ENCODE measurements at regions of chr2 and their contacts with region 1.

Region 1: GRCh38 chr2:169694113-169694903 is at the starts of genes CFAP210 and PHOSPHO2:
- DNase-seq: peak; percentile 100
- H3K4me3 Mint-ChIP-seq: peak within 1 kb of the TSS; percentile 84
- H3K27ac Mint-ChIP-seq: peak within 1 kb of the TSS; percentile 83
- H3K4me1 Mint-ChIP-seq: peaks cover 14% of the 10 kb centered on the region
- H3K27me3 Mint-ChIP-seq: peaks cover 22% of the 10 kb centered on the region
- total RNA-seq, gene CFAP210: not detected in 2 replicates
- total RNA-seq, gene PHOSPHO2: 3.0 and 3.2 TPM in 2 replicates

Region 2: GRCh38 chr2:169573160-169573973 is 120.9 kb before region 1 on chr2 and contains the start of gene FASTKD1:
- intact Hi-C with region 1: loop called (anchors 1 kb)
- DNase-seq: peak; percentile 95
- H3K4me3 Mint-ChIP-seq: peak within 1 kb of the TSS; percentile 94
- H3K27ac Mint-ChIP-seq: peak within 1 kb of the TSS; percentile 90
- H3K4me1 Mint-ChIP-seq: peaks cover 13% of the 10 kb centered on the region
- H3K27me3 Mint-ChIP-seq: peaks cover 2% of the 10 kb centered on the region
- total RNA-seq, gene FASTKD1: 55.2 and 56.5 TPM in 2 replicates

Region 3: GRCh38 chr2:169683054-169683424 is 11.3 kb before region 1 on chr2:
- intact Hi-C with region 1: loop called (anchors 1 kb)
- DNase-seq: peak; percentile 67
- H3K4me3 Mint-ChIP-seq: no peak overlapping the region
- H3K27ac Mint-ChIP-seq: no peak overlapping the region
- H3K4me1 Mint-ChIP-seq: peaks cover 5% of the 10 kb centered on the region
- H3K27me3 Mint-ChIP-seq: peaks cover 5% of the 10 kb centered on the region

Region 4: DNA sequence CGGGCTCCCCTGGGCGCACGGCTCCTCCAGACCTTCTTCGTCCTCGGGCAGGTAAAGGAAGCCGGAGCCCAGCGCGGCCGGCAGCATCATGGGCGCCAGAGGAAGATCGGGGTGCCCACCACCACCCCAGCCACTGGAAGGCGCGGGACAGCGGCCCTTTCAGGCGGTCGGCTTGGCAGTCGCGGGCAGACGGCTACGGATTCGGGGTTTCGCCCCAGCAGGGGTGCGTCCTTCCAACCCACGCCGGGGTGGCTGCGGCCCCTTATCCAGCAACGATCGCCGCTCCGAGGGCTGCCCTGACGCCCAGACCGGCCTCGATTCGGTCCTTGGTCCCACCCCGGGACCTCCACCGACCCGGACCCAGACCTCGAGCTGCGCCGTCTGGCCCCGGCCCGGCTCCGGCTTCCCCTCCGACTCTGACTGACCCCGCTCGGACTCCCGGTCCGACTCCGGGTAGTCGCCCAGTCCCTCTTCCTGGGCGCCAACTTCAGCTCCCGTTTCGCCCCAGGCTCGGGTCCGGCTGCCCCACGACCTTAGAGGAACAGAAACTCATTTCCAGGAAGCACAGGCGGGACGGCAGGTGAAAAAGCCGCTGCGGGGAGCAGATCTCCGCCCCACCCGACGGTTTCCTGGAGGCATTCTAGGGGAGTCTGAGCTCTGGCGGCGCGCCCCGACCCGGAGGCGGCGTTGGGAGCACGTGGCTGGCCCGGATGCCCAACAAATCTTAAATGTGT is 74.1 kb after region 1 on chr2:
- intact Hi-C with region 1: loop called (anchors 2 kb)
- DNase-seq: peak; percentile 78
- H3K4me3 Mint-ChIP-seq: peak overlapping the region; percentile 75
- H3K27ac Mint-ChIP-seq: no peak overlapping the region
- H3K4me1 Mint-ChIP-seq: peaks cover 13% of the 10 kb centered on the region
- H3K27me3 Mint-ChIP-seq: peaks cover 17% of the 10 kb centered on the region

Region 5: GRCh38 chr2:169824373-169825333 is 130.3 kb after region 1 on chr2 and contains the start of gene METTL5:
- intact Hi-C with region 1: loop called (anchors 2 kb)
- DNase-seq: peak; percentile 95
- H3K4me3 Mint-ChIP-seq: peak within 1 kb of the TSS; percentile 95
- H3K27ac Mint-ChIP-seq: peak within 1 kb of the TSS; percentile 88
- H3K4me1 Mint-ChIP-seq: peaks cover 44% of the 10 kb centered on the region
- H3K27me3 Mint-ChIP-seq: no peaks in the 10 kb centered on the region
- total RNA-seq, gene METTL5: 99.7 and 102 TPM in 2 replicates

Region 6: GRCh38 chr2:170022692-170023091 is 328.4 kb after region 1 on chr2:
- intact Hi-C with region 1: no loop called
- DNase-seq: no peak
- H3K4me3 Mint-ChIP-seq: no peak overlapping the region
- H3K27ac Mint-ChIP-seq: no peak overlapping the region
- H3K4me1 Mint-ChIP-seq: no peaks in the 10 kb centered on the region
- H3K27me3 Mint-ChIP-seq: no peaks in the 10 kb centered on the region